ENCODE measurements at regions of chr5 and their contacts with region 1.

Region 1: GRCh38 chr5:150560401-150561193 is 52.7 kb downstream of the NDST1 start:
- DNase-seq: peak; percentile 73 to 82 (median 79)
- H3K4me3 ChIP-seq: no peak overlapping the region
- H3K4me3 Mint-ChIP-seq: no peak overlapping the region
- H3K27ac ChIP-seq: no peak overlapping the region
- H3K27ac Mint-ChIP-seq: no peak overlapping the region
- H3K4me1 ChIP-seq: no peaks in the 10 kb centered on the region
- H3K4me1 Mint-ChIP-seq: peaks cover 0 to 1% (median under 1%) of the 10 kb centered on the region in 4 donors
- H3K27me3 ChIP-seq: no peaks in the 10 kb centered on the region
- H3K27me3 Mint-ChIP-seq: peaks cover 0 to 3% of the 10 kb centered on the region in 2 donors

Region 2: GRCh38 chr5:150548096-150548495 is 12.5 kb before region 1 on chr5:
- CTCF ChIA-PET with region 1: interaction called, 16 read pairs
- POLR2A ChIA-PET with region 1: no interaction called
- intact Hi-C with region 1: no loop called
- DNase-seq: no peak
- H3K4me3 ChIP-seq: no peak overlapping the region
- H3K4me3 Mint-ChIP-seq: no peak overlapping the region
- H3K27ac ChIP-seq: no peak overlapping the region
- H3K27ac Mint-ChIP-seq: no peak overlapping the region
- H3K4me1 ChIP-seq: no peaks in the 10 kb centered on the region
- H3K4me1 Mint-ChIP-seq: no peaks in the 10 kb centered on the region
- H3K27me3 ChIP-seq: no peaks in the 10 kb centered on the region
- H3K27me3 Mint-ChIP-seq: peaks cover 0 to 2% of the 10 kb centered on the region in 2 donors

Region 3: DNA sequence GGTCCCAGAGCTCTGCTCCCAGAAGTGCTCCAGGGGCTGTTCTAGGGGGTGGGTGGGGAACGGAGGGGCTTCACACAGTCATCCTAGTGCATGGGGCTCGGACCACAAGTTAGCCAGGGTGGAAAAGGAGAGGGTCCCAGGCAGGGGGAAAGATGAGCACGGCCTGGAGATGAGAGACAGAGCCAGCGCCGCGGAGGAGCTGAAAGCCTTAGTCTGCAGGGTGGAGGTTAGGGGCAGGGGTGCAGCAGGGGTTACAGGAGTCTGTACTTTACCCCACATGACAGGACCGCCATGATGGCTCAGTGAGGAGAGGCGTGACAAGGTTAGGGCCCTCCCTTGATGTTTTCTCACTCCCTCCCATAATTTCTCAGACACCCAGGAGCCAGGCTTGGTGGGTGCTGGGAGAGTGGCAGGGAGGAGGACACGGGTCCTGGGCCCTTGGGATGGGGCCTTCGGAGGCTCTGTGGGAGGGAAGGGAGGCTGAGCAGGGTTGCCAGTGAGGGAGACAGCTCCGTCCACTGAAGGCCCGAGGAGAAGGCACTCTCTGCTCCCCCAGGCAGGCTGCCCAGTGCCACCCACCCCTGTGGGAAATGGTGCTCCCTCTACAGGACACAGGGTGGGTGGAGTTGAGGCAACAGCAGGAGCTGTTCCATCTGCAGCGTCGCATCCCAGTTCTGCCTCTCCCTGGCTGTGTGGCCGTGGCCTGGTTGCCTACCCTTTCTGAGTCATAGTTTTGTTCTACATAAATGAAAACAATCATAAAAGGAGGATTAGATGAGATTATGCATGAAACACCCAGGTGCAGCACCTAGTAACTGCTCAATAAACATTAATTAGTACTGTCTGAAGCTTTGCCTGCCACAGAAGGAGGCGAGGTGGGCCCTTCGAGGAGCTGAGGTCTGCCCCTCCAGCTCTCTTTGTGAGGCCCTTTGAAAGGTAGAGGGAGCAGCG is 13.5 kb after region 1 on chr5:
- CTCF ChIA-PET with region 1: interaction called, 14 read pairs
- POLR2A ChIA-PET with region 1: no interaction called
- intact Hi-C with region 1: no loop called
- DNase-seq: no peak
- H3K4me3 ChIP-seq: no peak overlapping the region
- H3K4me3 Mint-ChIP-seq: no peak overlapping the region
- H3K27ac ChIP-seq: no peak overlapping the region
- H3K27ac Mint-ChIP-seq: no peak overlapping the region
- H3K4me1 ChIP-seq: no peaks in the 10 kb centered on the region
- H3K4me1 Mint-ChIP-seq: no peaks in the 10 kb centered on the region
- H3K27me3 ChIP-seq: no peaks in the 10 kb centered on the region
- H3K27me3 Mint-ChIP-seq: no peaks in the 10 kb centered on the region

Region 4: DNA sequence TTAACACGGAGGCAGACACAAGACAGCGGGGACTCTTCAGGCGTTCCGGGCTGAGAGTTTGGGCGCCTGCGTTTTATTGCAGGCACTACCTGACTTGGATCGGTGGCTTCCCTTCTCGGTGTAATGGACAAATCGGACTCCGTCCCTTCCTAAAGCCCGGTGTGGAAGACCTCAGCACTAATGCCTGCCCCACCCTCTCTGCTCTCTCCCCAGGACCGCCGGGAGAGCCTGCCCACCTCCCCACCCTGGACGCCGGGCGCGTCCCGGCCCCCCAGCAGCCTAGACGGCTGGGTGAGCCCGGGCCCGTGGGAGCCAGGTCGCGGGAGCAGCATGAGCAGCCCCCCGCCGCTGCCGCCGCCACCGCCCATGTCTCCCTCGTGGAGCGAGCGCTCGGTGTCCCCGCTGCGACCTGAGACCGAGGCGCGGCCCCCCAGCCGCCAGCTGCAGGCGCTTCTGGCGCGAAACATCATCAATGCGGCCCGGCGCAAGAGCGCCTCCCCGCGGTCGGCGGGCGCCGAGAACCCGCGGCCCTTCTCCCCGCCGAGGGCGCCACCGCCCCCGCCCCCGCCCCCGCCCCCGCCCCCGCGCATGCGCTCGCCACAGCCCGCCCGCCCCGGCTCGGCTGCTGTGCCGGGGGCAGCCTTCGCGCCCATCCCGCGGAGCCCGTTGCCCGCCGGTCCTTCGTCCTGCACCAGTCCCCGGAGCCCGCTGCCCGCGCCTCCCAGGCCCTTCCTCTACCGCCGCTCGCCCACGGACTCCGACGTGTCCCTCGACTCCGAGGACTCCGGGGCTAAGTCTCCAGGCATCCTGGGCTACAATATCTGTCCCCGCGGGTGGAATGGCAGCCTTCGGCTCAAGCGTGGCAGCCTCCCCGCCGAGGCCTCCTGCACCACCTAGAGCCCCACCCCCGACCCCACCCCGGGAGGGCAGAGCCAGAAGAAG is 95.9 kb after region 1 on chr5:
- CTCF ChIA-PET with region 1: interaction called, 34 read pairs
- POLR2A ChIA-PET with region 1: no interaction called
- intact Hi-C with region 1: loop called (anchors 1 kb)
- DNase-seq: peak; percentile 76 to 85 (median 84)
- H3K4me3 ChIP-seq: peak overlapping the region; percentile 17 to 56
- H3K4me3 Mint-ChIP-seq: peak overlapping the region; percentile 81 to 92 (median 83)
- H3K27ac ChIP-seq: peak overlapping the region; percentile 28
- H3K27ac Mint-ChIP-seq: peak overlapping the region in 6 of 7 donors; percentile 11 to 88 (median 70)
- H3K4me1 ChIP-seq: peaks cover 12% of the 10 kb centered on the region
- H3K4me1 Mint-ChIP-seq: peaks cover 3 to 12% (median 9%) of the 10 kb centered on the region in 4 donors
- H3K27me3 ChIP-seq: no peaks in the 10 kb centered on the region
- H3K27me3 Mint-ChIP-seq: no peaks in the 10 kb centered on the region

Region 5: DNA sequence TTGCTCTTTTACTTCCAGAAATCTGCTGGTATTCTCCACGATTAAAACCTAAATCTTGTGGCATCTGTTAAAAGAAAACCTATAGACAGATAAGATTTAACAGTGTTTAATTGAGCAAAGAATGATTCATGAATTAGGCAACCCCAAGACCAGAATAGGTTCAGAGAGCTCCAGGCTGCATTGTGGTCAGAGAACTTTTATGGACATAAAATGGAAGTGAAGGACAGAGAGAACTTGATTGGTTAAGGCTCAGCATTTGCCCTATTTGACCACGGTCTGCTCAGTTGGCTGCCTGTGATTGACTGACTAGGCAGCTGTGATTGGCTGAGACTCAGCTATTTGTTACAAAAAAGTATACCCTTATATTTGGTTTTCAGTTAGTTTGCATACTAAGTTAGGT is 797.2 kb after region 1 on chr5:
- CTCF ChIA-PET with region 1: no interaction called
- POLR2A ChIA-PET with region 1: no interaction called
- intact Hi-C with region 1: no loop called
- DNase-seq: no peak
- H3K4me3 ChIP-seq: no peak overlapping the region
- H3K4me3 Mint-ChIP-seq: no peak overlapping the region
- H3K27ac ChIP-seq: no peak overlapping the region
- H3K27ac Mint-ChIP-seq: no peak overlapping the region
- H3K4me1 ChIP-seq: no peaks in the 10 kb centered on the region
- H3K4me1 Mint-ChIP-seq: no peaks in the 10 kb centered on the region
- H3K27me3 ChIP-seq: no peaks in the 10 kb centered on the region
- H3K27me3 Mint-ChIP-seq: peaks cover 5 to 8% of the 10 kb centered on the region in 2 donors